Common myeloid progenitor, CD34-positive (primary cell): ENCODE measurements at regions of chr18 and their contacts with region 1.

Region 1: GRCh38 chr18:48605408-48605845 is 66.6 kb downstream of the CTIF start:
- DNase-seq: peak; percentile 95 to 99 (median 98)
- H3K4me3 ChIP-seq: no peak overlapping the region
- H3K27ac ChIP-seq: no peak overlapping the region
- H3K4me1 ChIP-seq: peaks cover 8 to 27% (median 16%) of the 10 kb centered on the region in 4 experiments
- H3K27me3 ChIP-seq: no peaks in the 10 kb centered on the region

Region 2: DNA sequence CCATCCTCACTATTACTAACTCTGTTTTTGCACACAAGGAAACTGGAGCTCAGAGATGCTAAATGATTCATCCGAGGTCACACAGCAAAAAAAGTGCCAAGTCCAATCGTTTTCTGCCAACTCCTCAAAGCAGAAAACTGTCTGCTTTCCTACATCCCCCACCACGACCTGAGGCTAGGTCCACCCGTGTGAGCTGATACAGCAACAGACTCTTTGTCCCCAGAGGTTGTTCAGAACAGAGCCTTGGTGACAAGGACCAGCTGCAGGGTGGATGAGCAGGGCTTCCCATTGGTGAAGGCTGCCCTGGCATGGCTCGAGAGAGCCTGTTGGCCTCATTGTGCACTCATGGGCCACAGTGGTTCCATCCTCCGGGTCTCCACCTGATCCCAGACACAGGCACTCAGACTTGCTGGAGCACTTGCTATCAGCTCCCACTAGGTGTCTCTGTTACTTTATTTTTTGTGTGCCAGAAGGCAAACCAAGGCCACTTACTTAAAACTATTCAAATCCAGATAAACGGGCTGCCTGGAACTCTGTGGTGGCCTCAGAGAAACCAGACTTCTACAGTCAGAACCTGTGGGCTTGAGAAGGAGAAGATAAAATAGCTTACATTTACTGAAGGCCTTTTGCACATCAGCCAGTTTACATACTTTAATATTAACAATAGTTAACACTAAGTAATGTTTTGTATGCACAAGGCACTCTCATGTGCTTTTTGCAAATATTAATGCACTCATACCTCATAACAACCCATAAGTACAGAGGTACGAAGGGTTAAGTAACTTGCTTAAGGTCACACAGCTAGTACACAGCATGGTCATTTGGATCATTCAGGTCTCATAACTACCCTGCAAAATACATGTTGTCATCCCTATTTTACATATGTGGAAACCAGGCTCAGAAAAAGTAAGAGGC is 129.5 kb before region 1 on chr18:
- CTCF ChIA-PET with region 1: interaction called, 30 read pairs
- POLR2A ChIA-PET with region 1: no interaction called
- DNase-seq: peak; percentile 74 to 87 (median 84)
- H3K4me3 ChIP-seq: no peak overlapping the region
- H3K27ac ChIP-seq: no peak overlapping the region
- H3K4me1 ChIP-seq: no peaks in the 10 kb centered on the region
- H3K27me3 ChIP-seq: peaks cover 0 to 13% (median 2%) of the 10 kb centered on the region in 5 experiments

Region 3: GRCh38 chr18:48594471-48595094 is 10.8 kb before region 1 on chr18:
- CTCF ChIA-PET with region 1: interaction called, 17 read pairs
- POLR2A ChIA-PET with region 1: no interaction called
- DNase-seq: no peak
- H3K4me3 ChIP-seq: no peak overlapping the region
- H3K27ac ChIP-seq: no peak overlapping the region
- H3K4me1 ChIP-seq: peaks cover 0 to under 1% (median 0%) of the 10 kb centered on the region in 4 experiments
- H3K27me3 ChIP-seq: no peaks in the 10 kb centered on the region

Region 4: DNA sequence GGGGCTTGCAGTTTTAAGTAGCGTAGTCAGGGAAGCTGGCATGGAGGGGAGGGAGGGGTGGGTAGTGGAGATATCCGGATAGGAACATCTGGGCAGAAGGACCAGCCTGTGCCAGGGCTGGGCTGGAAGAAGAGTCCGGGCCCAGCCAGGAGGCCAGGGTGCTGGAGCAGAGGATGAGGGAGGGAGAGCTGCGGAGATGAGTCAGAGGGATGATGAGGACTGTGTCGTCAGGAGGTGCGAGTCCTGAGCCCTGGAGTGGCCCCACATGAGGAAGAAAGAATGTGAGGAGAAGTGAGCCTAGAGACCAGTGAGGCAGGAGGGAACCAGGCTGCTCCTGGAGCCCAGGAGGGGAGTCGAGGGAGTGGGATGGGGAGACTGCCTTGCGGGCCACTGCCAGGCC is 15.8 kb after region 1 on chr18:
- CTCF ChIA-PET with region 1: interaction called, 18 read pairs
- POLR2A ChIA-PET with region 1: no interaction called
- DNase-seq: no peak
- H3K4me3 ChIP-seq: no peak overlapping the region
- H3K27ac ChIP-seq: no peak overlapping the region
- H3K4me1 ChIP-seq: no peaks in the 10 kb centered on the region
- H3K27me3 ChIP-seq: no peaks in the 10 kb centered on the region

Region 5: GRCh38 chr18:48879008-48879431 is 273.6 kb after region 1 on chr18:
- CTCF ChIA-PET with region 1: no interaction called
- POLR2A ChIA-PET with region 1: no interaction called
- DNase-seq: no peak
- H3K4me3 ChIP-seq: no peak overlapping the region
- H3K27ac ChIP-seq: no peak overlapping the region
- H3K4me1 ChIP-seq: peaks cover 0 to 4% (median 0%) of the 10 kb centered on the region in 4 experiments
- H3K27me3 ChIP-seq: peaks cover 0 to 4% (median 0%) of the 10 kb centered on the region in 5 experiments